ENCODE measurements at regions of chr1 and their contacts with region 1.

Region 1: DNA sequence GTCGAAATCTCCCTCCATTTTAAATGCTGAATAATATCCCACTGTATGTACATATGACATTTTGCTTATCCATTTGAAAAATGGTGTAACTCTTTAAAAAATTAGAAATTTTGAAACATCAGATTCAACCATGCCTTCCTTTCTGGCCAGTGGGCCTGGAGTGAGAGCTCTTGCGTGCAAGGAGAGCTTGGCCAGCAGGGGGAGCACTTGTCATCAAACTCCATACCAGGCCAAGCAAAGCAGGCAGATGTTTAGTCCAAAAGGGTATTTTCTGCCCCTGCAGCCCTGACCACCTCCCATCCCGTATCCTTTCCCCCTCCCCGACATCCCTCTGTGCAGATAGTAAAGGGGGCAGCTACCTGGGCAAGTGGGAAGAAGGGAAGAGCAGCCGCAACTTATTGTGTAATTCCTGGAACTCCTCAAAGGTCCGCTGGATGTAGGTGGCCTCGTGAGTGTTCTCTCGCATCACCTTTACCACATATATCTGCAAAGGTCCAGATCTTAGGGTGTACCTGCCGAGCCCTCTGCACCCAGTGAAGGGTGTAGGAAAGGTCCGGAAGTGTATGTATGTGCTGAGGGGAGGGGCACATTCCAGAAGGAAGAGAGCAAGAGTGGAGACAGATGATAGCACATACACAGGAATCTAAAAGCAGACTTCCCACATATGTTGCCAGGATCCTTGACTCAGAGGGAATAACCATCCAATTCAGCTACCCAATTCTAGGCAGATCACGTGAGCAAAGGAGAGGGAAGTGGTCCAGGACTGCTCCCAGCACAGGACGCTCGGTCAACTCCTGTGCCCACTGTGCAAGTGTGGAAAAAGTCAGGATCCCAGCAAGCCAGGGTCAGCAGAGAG is 19.9 kb upstream of the PPP1R15B start:
- DNase-seq: no peak
- H3K4me3 ChIP-seq: no peak overlapping the region
- H3K27me3 ChIP-seq: no peaks in the 10 kb centered on the region
- CTCF ChIP-seq: peak; percentile 94

Region 2: DNA sequence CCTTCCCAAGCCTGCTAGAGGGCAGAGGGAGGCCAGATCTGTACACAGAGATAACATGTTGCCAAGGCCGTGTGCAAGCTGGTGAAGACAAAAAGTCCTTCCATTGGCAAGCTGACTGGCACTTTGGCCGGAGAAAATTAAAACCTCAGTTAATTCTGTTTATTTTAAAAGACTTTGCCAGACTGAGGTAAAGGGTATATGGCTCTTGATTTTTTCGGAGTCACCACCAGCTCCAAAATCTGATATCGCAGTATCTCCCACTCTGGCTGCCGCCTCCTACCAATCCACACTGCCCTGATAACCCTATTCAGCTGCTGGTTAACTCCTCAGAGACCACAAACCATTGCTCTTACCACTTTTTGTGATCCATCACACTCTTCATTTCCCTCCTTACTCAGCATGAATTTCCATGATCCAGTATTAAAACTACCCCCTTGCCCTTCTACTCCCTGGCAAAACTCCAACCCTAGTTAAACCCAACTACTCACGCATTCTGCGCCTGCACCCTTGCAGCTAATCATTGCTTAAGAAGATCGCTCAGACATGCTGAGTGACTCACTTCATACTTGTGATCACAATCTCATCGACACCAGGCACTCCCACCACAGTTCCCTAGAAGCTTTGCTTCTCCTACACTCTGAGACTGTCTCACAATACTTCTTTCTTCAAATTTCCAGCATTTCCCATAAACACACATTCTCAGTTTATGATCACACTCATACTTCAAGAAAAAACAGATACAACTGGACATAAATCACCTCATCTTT is 14.1 kb before region 1 on chr1:
- CTCF ChIA-PET with region 1: interaction called, 34 read pairs
- POLR2A ChIA-PET with region 1: no interaction called
- DNase-seq: peak; percentile 98
- H3K4me3 ChIP-seq: peak overlapping the region; percentile 5; the same call in 1 of the 2 replicates
- H3K27me3 ChIP-seq: no peaks in the 10 kb centered on the region
- CTCF ChIP-seq: no peak

Region 3: GRCh38 chr1:204456826-204457442 is 25.4 kb after region 1 on chr1:
- CTCF ChIA-PET with region 1: interaction called, 14 read pairs
- POLR2A ChIA-PET with region 1: no interaction called
- DNase-seq: no peak
- H3K4me3 ChIP-seq: no peak overlapping the region
- H3K27me3 ChIP-seq: no peaks in the 10 kb centered on the region; the same call in 1 of the 2 replicates
- CTCF ChIP-seq: no peak

Region 4: DNA sequence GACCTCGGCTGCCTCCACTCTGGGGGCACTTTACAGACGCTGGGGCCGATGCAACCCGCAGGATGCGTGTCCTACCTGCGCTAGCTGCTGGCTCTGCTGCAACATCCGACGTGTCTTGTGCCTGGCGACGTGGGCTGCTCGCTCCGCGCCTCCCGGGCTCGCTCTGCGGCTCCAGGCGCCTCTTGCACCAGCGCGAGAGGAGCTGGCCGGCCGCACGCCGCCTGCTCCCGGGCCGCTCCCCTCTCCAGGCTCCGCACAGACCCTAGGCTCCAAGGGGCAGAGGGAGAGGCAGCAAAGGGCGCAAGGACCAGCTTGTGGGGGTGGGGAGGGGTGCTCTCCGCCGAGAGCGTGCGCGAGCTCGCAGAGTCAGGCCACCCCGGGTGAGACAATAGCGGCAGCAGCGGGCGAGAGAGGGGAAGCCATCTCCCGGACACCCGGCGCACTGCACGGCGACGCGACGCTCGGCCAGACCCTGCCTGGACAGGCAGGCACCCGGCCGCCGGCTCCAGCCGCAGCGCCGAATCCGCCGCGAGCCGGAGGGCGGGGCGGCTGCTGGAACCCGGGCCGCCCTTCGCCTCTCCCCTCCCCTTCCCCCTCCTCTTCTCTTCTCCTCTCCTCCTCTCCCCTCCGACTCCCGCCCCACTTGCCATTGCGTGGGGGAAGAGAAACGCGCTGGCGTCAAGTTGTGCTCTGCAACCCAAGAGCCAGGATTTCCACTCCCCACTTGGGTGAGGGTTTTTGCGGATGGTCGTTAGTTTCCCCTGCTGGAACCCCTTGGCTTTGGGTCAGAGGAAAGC is 62.9 kb after region 1 on chr1 and contains the start of gene PIK3C2B:
- CTCF ChIA-PET with region 1: interaction called, 44 read pairs
- POLR2A ChIA-PET with region 1: no interaction called
- DNase-seq: no peak
- H3K4me3 ChIP-seq: peak within 1 kb of the TSS; percentile 64
- H3K27me3 ChIP-seq: peaks cover 3% of the 10 kb centered on the region
- CTCF ChIP-seq: peak; percentile 53
- polyA plus RNA-seq, gene PIK3C2B: 5.1 and 7.9 TPM in 2 replicates